ENCODE measurements at regions of chr17 and their contacts with region 1.

Region 1: DNA sequence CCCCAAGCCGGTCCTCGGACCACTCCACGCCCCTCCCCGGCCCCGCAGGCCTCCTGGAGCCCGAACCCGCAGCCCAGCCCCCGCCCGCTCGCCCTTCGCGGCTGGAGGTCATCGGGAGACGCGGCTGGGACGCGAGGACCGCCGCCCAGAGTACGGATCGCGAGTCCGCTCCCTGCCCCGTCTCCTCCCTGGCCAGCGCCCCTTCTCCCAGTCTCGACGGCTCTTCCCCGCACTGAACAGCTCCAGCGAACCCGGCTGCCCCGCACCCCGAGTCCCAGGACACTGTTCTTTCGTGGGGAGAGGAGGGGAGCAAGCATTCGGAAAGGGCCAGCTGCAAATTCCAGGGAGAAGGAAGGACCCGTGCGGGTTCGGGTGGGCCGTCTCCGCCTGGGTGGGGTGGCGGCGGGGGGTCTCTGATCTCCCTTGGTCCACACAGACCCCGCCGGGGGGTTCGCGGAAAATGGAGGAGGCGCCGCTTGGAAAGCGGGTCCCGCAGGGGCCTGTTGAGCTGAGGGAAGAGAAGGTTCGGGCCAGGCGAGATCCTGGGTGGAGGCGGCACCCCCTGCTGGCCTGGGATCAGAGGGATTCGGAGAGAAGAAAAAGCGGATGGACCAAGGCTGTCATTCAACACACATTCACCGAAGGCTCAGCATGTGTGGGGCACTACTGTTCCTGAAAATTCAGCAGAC is 632 bp upstream of the RTN4RL1 start:
- DNase-seq: peak; percentile 68 to 73
- H3K4me3 ChIP-seq: peak overlapping the region in 1 of 3 donors; percentile 34
- H3K27ac ChIP-seq: no peak overlapping the region
- H3K4me1 ChIP-seq: peaks cover 11 to 34% of the 10 kb centered on the region in 2 donors
- H3K27me3 ChIP-seq: peaks cover 8% of the 10 kb centered on the region
- CTCF ChIP-seq: peak in 5 of 6 experiments; percentile 30 to 77 (median 67)
- POLR2A ChIP-seq: no peak

Region 2: GRCh38 chr17:1909985-1910384 is 115.8 kb before region 1 on chr17:
- intact Hi-C with region 1: loop called (anchors 2 kb)
- DNase-seq: no peak
- H3K4me3 ChIP-seq: no peak overlapping the region
- H3K27ac ChIP-seq: no peak overlapping the region
- H3K4me1 ChIP-seq: peaks cover 8% of the 10 kb centered on the region in 2 donors
- H3K27me3 ChIP-seq: peaks cover 6% of the 10 kb centered on the region
- CTCF ChIP-seq: no peak
- POLR2A ChIP-seq: no peak

Region 3: DNA sequence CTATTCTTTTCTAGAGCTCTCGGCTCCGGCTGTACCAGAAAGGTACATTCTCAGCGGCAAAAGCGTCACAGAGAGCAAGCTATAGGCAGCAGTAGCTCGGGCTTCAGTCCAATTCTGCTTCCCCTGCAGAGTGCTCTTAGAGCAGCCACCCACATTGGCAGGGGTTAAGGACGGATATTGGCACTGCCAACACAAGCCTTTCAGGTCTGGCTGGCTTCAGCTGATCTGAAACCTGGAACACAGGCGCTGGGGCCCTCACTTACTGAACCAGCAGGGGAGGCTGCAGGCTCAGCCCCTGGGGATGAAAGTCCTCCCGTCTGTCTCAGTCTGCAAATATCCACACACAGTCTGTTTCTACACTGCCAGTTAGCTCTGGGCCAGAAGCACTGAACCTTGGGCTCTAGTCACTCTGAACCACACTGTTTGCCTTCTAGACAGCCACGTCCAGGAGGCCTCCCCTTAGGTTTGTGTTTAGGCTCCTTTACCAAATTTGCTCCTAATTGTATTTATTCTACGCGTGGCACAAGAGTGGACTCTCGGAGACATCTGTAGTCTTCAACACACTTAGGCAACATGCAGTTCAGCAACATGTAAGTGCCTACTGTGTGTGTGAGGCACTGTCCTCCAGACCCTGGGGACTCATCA is 69.2 kb after region 1 on chr17:
- intact Hi-C with region 1: no loop called
- DNase-seq: peak; percentile 92 to 93
- H3K4me3 ChIP-seq: no peak overlapping the region
- H3K27ac ChIP-seq: peak overlapping the region; percentile 67 to 74 (median 73)
- H3K4me1 ChIP-seq: peaks cover 30 to 48% of the 10 kb centered on the region in 2 donors
- H3K27me3 ChIP-seq: no peaks in the 10 kb centered on the region
- CTCF ChIP-seq: peak; percentile 71 to 99 (median 96)
- POLR2A ChIP-seq: no peak